HCT116 (cell line): ENCODE measurements at regions of chr17 and their contacts with region 1.

Region 1: GRCh38 chr17:77441130-77441920 is 300.6 kb downstream of the SEC14L1 start:
- DNase-seq: no peak
- ATAC-seq: no peak
- H3K4me3 ChIP-seq: no peak overlapping the region
- H3K27ac ChIP-seq: no peak overlapping the region
- H3K4me1 ChIP-seq: no peaks in the 10 kb centered on the region; a peak in 1 of 4 replicates
- H3K27me3 ChIP-seq: no peaks in the 10 kb centered on the region
- CTCF ChIP-seq: no peak
- POLR2A ChIP-seq: no peak
- RAD21 ChIP-seq: no peak

Region 2: GRCh38 chr17:77429919-77430752 is 11.2 kb before region 1 on chr17:
- CTCF ChIA-PET with region 1: interaction called, 18 read pairs
- POLR2A ChIA-PET with region 1: no interaction called
- RAD21 ChIA-PET with region 1: no interaction called
- intact Hi-C with region 1: no loop called
- DNase-seq: peak; percentile 48
- ATAC-seq: peak; percentile 80
- H3K4me3 ChIP-seq: no peak overlapping the region
- H3K27ac ChIP-seq: no peak overlapping the region
- H3K4me1 ChIP-seq: peaks cover 0 to 43% of the 10 kb centered on the region in 2 experiments; a peak in 2 of 4 replicates
- H3K27me3 ChIP-seq: no peaks in the 10 kb centered on the region
- CTCF ChIP-seq: peak; percentile 69 to 94 (median 92); a peak in 5 of 6 replicates
- POLR2A ChIP-seq: no peak
- RAD21 ChIP-seq: peak; percentile 79